Naive thymus-derived CD4-positive, alpha-beta T cell (primary cell): ENCODE measurements at regions of chr10 and their contacts with region 1.

Region 1: DNA sequence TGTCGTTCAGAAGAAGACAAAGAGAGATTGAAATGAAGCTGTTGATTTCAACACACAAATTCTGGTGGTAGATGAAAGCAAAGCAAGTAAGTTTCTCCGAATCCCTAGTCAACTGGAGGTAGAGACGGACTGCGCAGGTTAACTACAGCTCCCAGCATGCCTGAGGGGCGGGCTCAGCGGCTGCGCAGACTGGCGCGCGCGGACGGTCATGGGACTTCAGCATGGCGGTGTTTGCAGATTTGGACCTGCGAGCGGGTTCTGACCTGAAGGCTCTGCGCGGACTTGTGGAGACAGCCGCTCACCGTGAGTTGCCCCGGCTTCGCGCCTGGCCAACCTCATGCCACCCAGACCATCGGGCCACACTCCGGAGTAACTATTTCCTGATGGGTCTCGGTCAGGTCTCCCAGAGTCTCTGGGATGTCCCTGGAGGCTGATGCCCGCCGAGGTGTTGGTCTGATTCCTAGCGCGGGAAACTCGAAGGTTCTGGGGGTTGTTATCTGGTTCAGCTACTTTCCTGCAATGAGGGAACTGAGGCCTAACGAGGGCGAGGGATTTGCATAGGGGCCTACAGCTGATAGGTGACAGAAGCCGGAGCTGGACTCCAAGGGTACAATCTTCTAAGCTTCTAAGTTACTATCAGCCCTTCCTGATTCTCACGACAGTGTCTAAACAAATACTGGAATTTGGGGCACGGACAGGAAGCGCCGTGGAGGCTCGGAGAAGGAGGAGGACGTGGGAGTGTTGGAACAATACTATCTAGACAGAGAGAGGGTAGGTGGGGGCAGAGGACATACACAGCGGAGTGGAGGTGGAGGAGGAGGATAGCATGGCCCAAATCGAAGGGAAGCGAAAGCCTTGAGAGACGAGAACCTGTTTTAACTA is at the start of gene RPP30:
- DNase-seq: peak; percentile 71 to 83 (median 77)
- ATAC-seq: peak; percentile 99
- H3K4me3 ChIP-seq: peak within 1 kb of the TSS; percentile 83
- H3K4me3 Mint-ChIP-seq: peak within 1 kb of the TSS; percentile 94 to 99 (median 98)
- H3K27ac ChIP-seq: peak within 1 kb of the TSS; percentile 71
- H3K27ac Mint-ChIP-seq: peak within 1 kb of the TSS; percentile 73 to 95 (median 88)
- H3K4me1 ChIP-seq: peaks cover 14 to 23% of the 10 kb centered on the region in 2 donors
- H3K4me1 Mint-ChIP-seq: peaks cover 24 to 53% (median 37%) of the 10 kb centered on the region in 7 donors
- H3K27me3 ChIP-seq: no peaks in the 10 kb centered on the region
- H3K27me3 Mint-ChIP-seq: peaks cover 22 to 40% (median 34%) of the 10 kb centered on the region in 5 donors
- total RNA-seq, gene RPP30: 24.1 to 45.6 (median 38.0) TPM

Region 2: GRCh38 chr10:89426230-89426868 is 1445.7 kb before region 1 on chr10:
- CTCF ChIA-PET with region 1: no interaction called
- POLR2A ChIA-PET with region 1: no interaction called
- intact Hi-C with region 1: loop called in 1 of 2 experiments (anchors 5 kb)
- DNase-seq: peak in 4 of 9 donors; percentile 23 to 38 (median 28)
- ATAC-seq: peak; percentile 81
- H3K4me3 ChIP-seq: no peak overlapping the region
- H3K4me3 Mint-ChIP-seq: no peak overlapping the region
- H3K27ac ChIP-seq: no peak overlapping the region
- H3K27ac Mint-ChIP-seq: no peak overlapping the region
- H3K4me1 ChIP-seq: no peaks in the 10 kb centered on the region
- H3K4me1 Mint-ChIP-seq: peaks cover under 1 to 8% (median 3%) of the 10 kb centered on the region in 7 donors
- H3K27me3 ChIP-seq: no peaks in the 10 kb centered on the region
- H3K27me3 Mint-ChIP-seq: peaks cover 0 to 16% (median 4%) of the 10 kb centered on the region in 5 donors

Region 3: GRCh38 chr10:89837150-89837888 is 1034.7 kb before region 1 on chr10:
- CTCF ChIA-PET with region 1: no interaction called
- POLR2A ChIA-PET with region 1: no interaction called
- intact Hi-C with region 1: loop called in 1 of 2 experiments (anchors 5 kb)
- DNase-seq: peak; percentile 14 to 48 (median 34)
- ATAC-seq: peak; percentile 70
- H3K4me3 ChIP-seq: peak overlapping the region; percentile 57
- H3K4me3 Mint-ChIP-seq: peak overlapping the region; percentile 87 to 94 (median 91)
- H3K27ac ChIP-seq: peak overlapping the region; percentile 65
- H3K27ac Mint-ChIP-seq: peak overlapping the region; percentile 59 to 92 (median 85)
- H3K4me1 ChIP-seq: peaks cover 0 to 7% of the 10 kb centered on the region in 2 donors
- H3K4me1 Mint-ChIP-seq: peaks cover 0 to 30% (median 22%) of the 10 kb centered on the region in 7 donors
- H3K27me3 ChIP-seq: no peaks in the 10 kb centered on the region
- H3K27me3 Mint-ChIP-seq: peaks cover 0 to 36% (median 5%) of the 10 kb centered on the region in 5 donors

Region 4: GRCh38 chr10:90857635-90858460 is 14.2 kb before region 1 on chr10 and contains the start of gene HTR7:
- CTCF ChIA-PET with region 1: interaction called, 3 read pairs
- POLR2A ChIA-PET with region 1: interaction called, 3 read pairs
- intact Hi-C with region 1: loop called (anchors 1 kb)
- DNase-seq: peak; percentile 47 to 78 (median 69)
- ATAC-seq: peak; percentile 91
- H3K4me3 ChIP-seq: peak within 1 kb of the TSS; percentile 63
- H3K4me3 Mint-ChIP-seq: peak within 1 kb of the TSS; percentile 88 to 95 (median 90)
- H3K27ac ChIP-seq: no peak within 1 kb of the TSS
- H3K27ac Mint-ChIP-seq: peak within 1 kb of the TSS in 3 of 9 donors; percentile 34 to 77 (median 62)
- H3K4me1 ChIP-seq: peaks cover 6 to 11% of the 10 kb centered on the region in 2 donors
- H3K4me1 Mint-ChIP-seq: peaks cover 0 to 16% (median 10%) of the 10 kb centered on the region in 7 donors
- H3K27me3 ChIP-seq: peaks cover 9 to 23% of the 10 kb centered on the region in 2 donors
- H3K27me3 Mint-ChIP-seq: peaks cover 48 to 83% (median 58%) of the 10 kb centered on the region in 5 donors
- total RNA-seq, gene HTR7: 0.11 to 0.32 (median 0.13) TPM in 3 of 5 experiments, not detected in the others

Region 5: GRCh38 chr10:91105269-91105668 is 233.3 kb after region 1 on chr10:
- CTCF ChIA-PET with region 1: no interaction called
- POLR2A ChIA-PET with region 1: no interaction called
- intact Hi-C with region 1: no loop called
- DNase-seq: no peak
- ATAC-seq: no peak
- H3K4me3 ChIP-seq: no peak overlapping the region
- H3K4me3 Mint-ChIP-seq: no peak overlapping the region
- H3K27ac ChIP-seq: no peak overlapping the region
- H3K27ac Mint-ChIP-seq: no peak overlapping the region
- H3K4me1 ChIP-seq: no peaks in the 10 kb centered on the region
- H3K4me1 Mint-ChIP-seq: peaks cover 0 to 18% (median 5%) of the 10 kb centered on the region in 7 donors
- H3K27me3 ChIP-seq: no peaks in the 10 kb centered on the region
- H3K27me3 Mint-ChIP-seq: peaks cover 0 to 18% (median 0%) of the 10 kb centered on the region in 5 donors

Region 6: GRCh38 chr10:91389636-91390512 is 517.9 kb after region 1 on chr10:
- CTCF ChIA-PET with region 1: no interaction called
- POLR2A ChIA-PET with region 1: no interaction called
- intact Hi-C with region 1: loop called in 1 of 2 experiments (anchors 5 kb)
- DNase-seq: peak in 7 of 9 donors; percentile 51 to 76 (median 68)
- ATAC-seq: peak; percentile 98
- H3K4me3 ChIP-seq: no peak overlapping the region
- H3K4me3 Mint-ChIP-seq: peak overlapping the region in 6 of 10 donors; percentile 4 to 67 (median 38)
- H3K27ac ChIP-seq: no peak overlapping the region
- H3K27ac Mint-ChIP-seq: peak overlapping the region in 1 of 9 donors; percentile 30
- H3K4me1 ChIP-seq: no peaks in the 10 kb centered on the region
- H3K4me1 Mint-ChIP-seq: peaks cover 0 to 11% (median 6%) of the 10 kb centered on the region in 7 donors
- H3K27me3 ChIP-seq: no peaks in the 10 kb centered on the region
- H3K27me3 Mint-ChIP-seq: peaks cover 12 to 34% (median 20%) of the 10 kb centered on the region in 5 donors

Region 7: GRCh38 chr10:91923371-91924211 is 1051.6 kb after region 1 on chr10 and contains the start of gene BTAF1:
- CTCF ChIA-PET with region 1: no interaction called
- POLR2A ChIA-PET with region 1: no interaction called
- intact Hi-C with region 1: loop called in 1 of 2 experiments (anchors 5 kb)
- DNase-seq: peak; percentile 86 to 93 (median 91)
- ATAC-seq: peak; percentile 97
- H3K4me3 ChIP-seq: peak within 1 kb of the TSS; percentile 70
- H3K4me3 Mint-ChIP-seq: peak within 1 kb of the TSS; percentile 91 to 100 (median 96)
- H3K27ac ChIP-seq: peak within 1 kb of the TSS; percentile 96
- H3K27ac Mint-ChIP-seq: peak within 1 kb of the TSS; percentile 97 to 99 (median 98)
- H3K4me1 ChIP-seq: peaks cover 9 to 25% of the 10 kb centered on the region in 2 donors
- H3K4me1 Mint-ChIP-seq: peaks cover 22 to 62% (median 45%) of the 10 kb centered on the region in 7 donors
- H3K27me3 ChIP-seq: no peaks in the 10 kb centered on the region
- H3K27me3 Mint-ChIP-seq: peaks cover under 1 to 8% (median 5%) of the 10 kb centered on the region in 5 donors
- total RNA-seq, gene BTAF1: 55.7 to 84.8 (median 78.5) TPM

Region 8: DNA sequence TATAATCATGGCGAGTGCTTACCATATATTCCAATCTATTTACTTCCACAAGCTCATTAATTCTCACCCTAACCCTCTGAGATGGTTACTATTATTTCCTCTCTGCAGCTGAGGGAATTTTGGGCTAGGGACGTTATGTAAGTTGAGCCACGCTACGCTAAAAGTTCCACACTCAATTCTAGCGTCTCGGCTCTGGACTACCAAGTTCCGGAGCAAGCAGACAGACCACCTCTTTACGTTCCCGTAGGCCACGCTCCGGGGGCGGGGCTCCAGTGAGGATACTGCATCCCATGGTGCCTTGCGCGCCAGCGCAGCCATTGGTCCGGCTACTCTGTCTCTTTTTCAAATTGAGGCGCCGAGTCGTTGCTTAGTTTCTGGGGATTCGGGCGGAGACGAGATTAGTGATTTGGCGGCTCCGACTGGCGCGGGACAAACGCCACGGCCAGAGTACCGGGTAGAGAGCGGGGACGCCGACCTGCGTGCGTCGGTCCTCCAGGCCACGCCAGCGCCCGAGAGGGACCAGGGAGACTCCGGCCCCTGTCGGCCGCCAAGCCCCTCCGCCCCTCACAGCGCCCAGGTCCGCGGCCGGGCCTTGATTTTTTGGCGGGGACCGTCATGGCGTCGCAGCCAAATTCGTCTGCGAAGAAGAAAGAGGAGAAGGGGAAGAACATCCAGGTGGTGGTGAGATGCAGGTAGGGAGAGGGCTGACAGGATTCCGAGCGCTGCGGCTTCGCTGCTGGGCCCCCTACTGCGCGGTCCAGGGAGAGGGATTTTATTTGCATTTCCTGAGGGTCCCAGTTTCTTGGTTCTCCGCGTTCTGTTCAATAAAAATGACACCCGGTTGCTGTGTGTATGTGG is 1721.0 kb after region 1 on chr10 and contains the start of gene KIF11:
- CTCF ChIA-PET with region 1: no interaction called
- POLR2A ChIA-PET with region 1: no interaction called
- intact Hi-C with region 1: loop called in 1 of 2 experiments (anchors 2 kb)
- DNase-seq: peak; percentile 89 to 95 (median 94)
- ATAC-seq: peak; percentile 89
- H3K4me3 ChIP-seq: peak within 1 kb of the TSS; percentile 83
- H3K4me3 Mint-ChIP-seq: peak within 1 kb of the TSS; percentile 95 to 100 (median 99)
- H3K27ac ChIP-seq: peak within 1 kb of the TSS; percentile 96
- H3K27ac Mint-ChIP-seq: peak within 1 kb of the TSS; percentile 96 to 100 (median 100)
- H3K4me1 ChIP-seq: peaks cover 12 to 28% of the 10 kb centered on the region in 2 donors
- H3K4me1 Mint-ChIP-seq: peaks cover 9 to 54% (median 28%) of the 10 kb centered on the region in 7 donors
- H3K27me3 ChIP-seq: no peaks in the 10 kb centered on the region
- H3K27me3 Mint-ChIP-seq: peaks cover 0 to 5% (median 0%) of the 10 kb centered on the region in 5 donors
- total RNA-seq, gene KIF11: 0.32 to 52.6 (median 0.75) TPM